PC-9 (cell line): ENCODE measurements at regions of chr20 and their contacts with region 1.

Region 1: DNA sequence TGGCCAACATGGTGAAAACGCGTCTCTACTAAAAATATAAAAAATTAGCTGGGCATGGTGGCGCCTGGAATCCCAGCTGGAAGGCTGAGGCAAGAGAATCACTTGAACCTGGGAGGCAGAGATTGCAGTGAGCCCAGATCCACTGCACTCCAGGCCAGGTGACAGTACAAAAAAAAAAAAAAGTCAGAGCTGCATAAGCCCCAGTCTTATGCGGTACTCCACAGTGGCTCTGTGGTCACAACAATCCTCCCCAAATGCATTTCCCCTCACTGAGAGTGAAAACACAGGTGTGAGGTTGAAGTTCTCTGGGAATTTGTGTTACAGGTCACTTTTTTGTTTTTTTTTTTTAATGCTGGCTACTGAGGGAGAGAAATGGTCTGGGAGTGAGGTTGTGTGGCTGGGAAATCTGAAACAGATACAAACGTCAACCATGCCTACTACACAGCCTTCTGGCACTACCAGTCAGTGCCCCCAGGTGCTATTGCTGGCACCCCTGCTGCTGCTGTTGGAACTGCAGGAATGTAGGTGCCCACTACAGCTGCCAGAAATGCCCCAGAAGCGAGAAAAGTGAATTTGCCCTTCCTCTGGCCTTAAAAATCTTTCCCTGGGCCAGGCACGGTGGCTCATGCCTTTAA is 5.7 kb downstream of the MRPS26 start:
- DNase-seq: no peak
- H3K4me3 ChIP-seq: no peak overlapping the region
- H3K27ac ChIP-seq: 0 out of 2 replicates have a peak overlapping the region, but pooled peaks have one; percentile 24
- H3K4me1 ChIP-seq: peaks cover 7% of the 10 kb centered on the region; the same call in 1 of the 2 replicates
- H3K27me3 ChIP-seq: no peaks in the 10 kb centered on the region
- CTCF ChIP-seq: no peak

Region 2: DNA sequence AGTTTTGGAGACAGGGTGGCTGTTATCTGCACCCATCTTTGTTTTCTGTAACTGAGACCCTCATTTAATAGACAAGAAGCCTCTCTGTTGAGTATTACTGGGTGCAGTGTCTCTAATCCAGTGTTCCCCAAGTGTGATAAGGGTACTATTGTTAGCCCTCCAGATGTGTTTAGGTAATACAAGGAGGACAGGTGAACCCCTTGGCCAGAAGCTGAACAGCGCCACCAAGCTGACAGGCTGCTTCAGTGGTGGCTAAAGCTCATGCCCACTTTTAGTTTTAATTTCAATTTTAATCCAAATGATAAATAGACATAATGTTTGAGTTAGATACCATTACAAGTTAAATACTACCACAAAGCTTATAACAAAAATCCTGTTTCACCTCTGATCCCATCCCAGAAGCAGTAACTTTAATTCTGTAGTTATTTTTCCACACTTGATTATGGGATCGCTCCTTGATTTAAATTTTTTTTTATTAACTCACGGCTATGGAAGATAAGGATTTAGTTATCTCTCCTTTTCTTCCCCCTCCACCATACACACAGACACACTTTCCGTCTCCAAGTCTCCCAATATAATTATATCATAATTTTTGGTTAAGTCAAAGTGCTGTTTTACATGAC is 958.2 kb before region 1 on chr20:
- CTCF ChIA-PET with region 1: no interaction called
- POLR2A ChIA-PET with region 1: no interaction called
- intact Hi-C with region 1: no loop called
- DNase-seq: peak in 1 of 2 experiments; percentile 26
- H3K4me3 ChIP-seq: no peak overlapping the region
- H3K27ac ChIP-seq: no peak overlapping the region
- H3K4me1 ChIP-seq: no peaks in the 10 kb centered on the region
- H3K27me3 ChIP-seq: peaks cover 29% of the 10 kb centered on the region
- CTCF ChIP-seq: peak; percentile 77

Region 3: GRCh38 chr20:2619961-2620595 is 431.4 kb before region 1 on chr20:
- CTCF ChIA-PET with region 1: no interaction called
- POLR2A ChIA-PET with region 1: no interaction called
- intact Hi-C with region 1: no loop called
- DNase-seq: no peak
- H3K4me3 ChIP-seq: no peak overlapping the region
- H3K27ac ChIP-seq: no peak overlapping the region
- H3K4me1 ChIP-seq: no peaks in the 10 kb centered on the region
- H3K27me3 ChIP-seq: peaks cover 27% of the 10 kb centered on the region
- CTCF ChIP-seq: no peak

Region 4: GRCh38 chr20:2825761-2826160 is 225.7 kb before region 1 on chr20:
- CTCF ChIA-PET with region 1: no interaction called
- POLR2A ChIA-PET with region 1: no interaction called
- intact Hi-C with region 1: no loop called
- DNase-seq: no peak
- H3K4me3 ChIP-seq: no peak overlapping the region
- H3K27ac ChIP-seq: no peak overlapping the region
- H3K4me1 ChIP-seq: peaks cover 7% of the 10 kb centered on the region; the same call in 1 of the 2 replicates
- H3K27me3 ChIP-seq: no peaks in the 10 kb centered on the region
- CTCF ChIP-seq: no peak

Region 5: GRCh38 chr20:3082306-3082951 is 30.9 kb after region 1 on chr20:
- CTCF ChIA-PET with region 1: no interaction called
- POLR2A ChIA-PET with region 1: interaction called, 4 read pairs
- intact Hi-C with region 1: loop called (anchors 1 kb)
- DNase-seq: no peak
- H3K4me3 ChIP-seq: no peak overlapping the region
- H3K27ac ChIP-seq: no peak overlapping the region
- H3K4me1 ChIP-seq: peaks cover 12% of the 10 kb centered on the region
- H3K27me3 ChIP-seq: no peaks in the 10 kb centered on the region
- CTCF ChIP-seq: no peak

Region 6: GRCh38 chr20:3109350-3110302 is 58.1 kb after region 1 on chr20:
- CTCF ChIA-PET with region 1: interaction called, 13 read pairs
- POLR2A ChIA-PET with region 1: no interaction called
- intact Hi-C with region 1: no loop called
- DNase-seq: no peak
- H3K4me3 ChIP-seq: no peak overlapping the region
- H3K27ac ChIP-seq: no peak overlapping the region
- H3K4me1 ChIP-seq: no peaks in the 10 kb centered on the region
- H3K27me3 ChIP-seq: no peaks in the 10 kb centered on the region
- CTCF ChIP-seq: no peak

Region 7: GRCh38 chr20:3115190-3116107 is 63.9 kb after region 1 on chr20:
- CTCF ChIA-PET with region 1: no interaction called
- POLR2A ChIA-PET with region 1: no interaction called
- intact Hi-C with region 1: loop called (anchors 1 kb)
- DNase-seq: peak; percentile 33 to 46
- H3K4me3 ChIP-seq: no peak overlapping the region
- H3K27ac ChIP-seq: no peak overlapping the region
- H3K4me1 ChIP-seq: no peaks in the 10 kb centered on the region
- H3K27me3 ChIP-seq: no peaks in the 10 kb centered on the region
- CTCF ChIP-seq: peak; percentile 81

Region 8: GRCh38 chr20:3204124-3204822 is 152.8 kb after region 1 on chr20 and contains the start of gene DDRGK1:
- CTCF ChIA-PET with region 1: no interaction called
- POLR2A ChIA-PET with region 1: no interaction called
- intact Hi-C with region 1: loop called (anchors 10 kb)
- DNase-seq: peak; percentile 68 to 92
- H3K4me3 ChIP-seq: peak within 1 kb of the TSS; percentile 89
- H3K27ac ChIP-seq: peak within 1 kb of the TSS; percentile 54
- H3K4me1 ChIP-seq: peaks cover 14% of the 10 kb centered on the region
- H3K27me3 ChIP-seq: no peaks in the 10 kb centered on the region
- CTCF ChIP-seq: no peak
- total RNA-seq, gene DDRGK1: 70.4 and 87.6 TPM in 2 replicates

Region 9: DNA sequence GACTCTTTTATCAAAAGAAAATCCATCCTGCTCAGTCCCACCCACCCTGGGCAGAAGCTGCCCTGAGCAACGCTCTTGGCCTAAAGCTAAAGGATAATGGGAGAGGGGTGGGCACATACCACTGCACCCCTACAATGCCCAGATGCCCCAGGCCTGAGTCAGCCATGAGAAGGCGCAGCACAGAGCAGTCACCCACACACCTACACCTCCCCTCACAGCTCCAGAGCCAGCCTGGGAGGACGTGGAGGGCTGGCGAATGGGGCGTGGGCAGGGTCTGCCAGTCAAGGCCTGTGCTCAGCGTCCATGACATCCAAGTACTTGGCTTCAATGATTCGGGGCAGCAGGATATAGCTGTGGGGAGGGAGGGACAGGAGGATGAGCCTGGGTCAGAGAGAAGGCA is 176.0 kb after region 1 on chr20:
- CTCF ChIA-PET with region 1: no interaction called
- POLR2A ChIA-PET with region 1: interaction called, 13 read pairs
- intact Hi-C with region 1: no loop called
- DNase-seq: peak in 1 of 2 experiments; percentile 91
- H3K4me3 ChIP-seq: no peak overlapping the region
- H3K27ac ChIP-seq: no peak overlapping the region
- H3K4me1 ChIP-seq: no peaks in the 10 kb centered on the region
- H3K27me3 ChIP-seq: no peaks in the 10 kb centered on the region
- CTCF ChIP-seq: no peak

Region 10: DNA sequence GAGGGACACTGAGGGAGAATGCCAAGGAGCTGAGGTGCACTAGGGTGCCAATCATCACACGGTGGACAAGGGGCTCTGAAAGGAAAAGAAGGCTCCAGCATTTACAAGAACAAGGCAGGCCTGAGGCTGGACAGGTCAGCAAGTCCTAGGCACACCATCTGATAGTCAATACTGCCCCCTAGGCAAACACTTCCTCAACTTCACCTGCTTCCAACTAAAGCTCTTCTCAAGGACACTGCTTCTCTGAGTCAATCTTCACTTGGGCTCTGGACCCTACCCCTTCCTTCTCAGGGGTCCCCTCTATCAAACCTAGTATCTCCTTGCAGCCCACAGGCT is 225.1 kb after region 1 on chr20:
- CTCF ChIA-PET with region 1: interaction called, 5 read pairs
- POLR2A ChIA-PET with region 1: no interaction called
- intact Hi-C with region 1: loop called (anchors 1 kb)
- DNase-seq: peak in 1 of 2 experiments; percentile 36
- H3K4me3 ChIP-seq: no peak overlapping the region
- H3K27ac ChIP-seq: no peak overlapping the region
- H3K4me1 ChIP-seq: no peaks in the 10 kb centered on the region
- H3K27me3 ChIP-seq: no peaks in the 10 kb centered on the region
- CTCF ChIP-seq: peak; percentile 65

Region 11: GRCh38 chr20:3398681-3399252 is 347.3 kb after region 1 on chr20:
- CTCF ChIA-PET with region 1: no interaction called
- POLR2A ChIA-PET with region 1: no interaction called
- intact Hi-C with region 1: no loop called
- DNase-seq: no peak
- H3K4me3 ChIP-seq: no peak overlapping the region
- H3K27ac ChIP-seq: no peak overlapping the region
- H3K4me1 ChIP-seq: no peaks in the 10 kb centered on the region
- H3K27me3 ChIP-seq: no peaks in the 10 kb centered on the region
- CTCF ChIP-seq: no peak